WTC11 (cell line): ENCODE measurements at regions of chr4 and their contacts with region 1.

Region 1: DNA sequence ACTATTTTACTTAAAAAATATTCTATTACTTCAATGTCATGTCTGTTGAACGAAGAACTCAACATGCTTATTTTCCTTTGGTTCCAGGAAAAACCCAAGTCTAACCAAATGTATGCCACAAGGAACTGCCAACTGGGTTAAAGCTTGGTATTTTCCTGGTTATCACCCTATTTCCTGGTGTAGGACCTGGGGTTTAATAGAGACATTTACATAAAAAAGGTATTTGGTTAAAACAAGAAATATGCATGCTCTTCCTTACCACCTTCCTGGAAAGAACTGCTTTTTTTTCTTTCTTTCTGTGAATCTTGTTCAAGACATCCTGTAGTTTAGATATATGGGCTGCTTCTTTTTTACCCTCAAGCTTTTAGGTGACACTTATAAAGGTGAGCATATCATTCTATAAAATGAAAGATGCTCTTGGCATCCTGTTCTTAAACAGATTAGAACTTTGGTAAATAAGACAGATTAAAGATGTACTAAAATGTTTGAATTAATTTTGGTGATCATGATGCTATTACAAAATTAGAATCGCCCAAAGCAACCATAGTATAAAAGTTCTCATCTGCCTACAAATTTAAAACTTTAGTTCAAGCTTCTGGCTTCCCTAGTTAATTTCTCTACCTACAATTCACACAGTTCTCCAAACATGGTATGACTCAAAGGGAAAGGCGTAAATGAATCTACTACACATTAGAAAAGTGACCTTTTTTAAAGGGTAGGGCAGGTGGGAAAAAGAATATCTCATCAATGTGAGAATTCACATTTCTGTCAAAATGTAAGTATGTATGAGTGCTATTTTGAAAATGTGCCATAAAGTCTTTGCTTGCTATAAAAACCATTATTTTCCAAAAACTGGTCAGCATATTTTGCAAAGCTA is 103.5 kb downstream of the CNOT6L start:
- DNase-seq: no peak
- ATAC-seq: no peak
- H3K4me3 Mint-ChIP-seq: no peak overlapping the region
- H3K27ac Mint-ChIP-seq: 0 out of 2 replicates have a peak overlapping the region, but pooled peaks have one; percentile 20
- H3K4me1 Mint-ChIP-seq: peaks cover 31% of the 10 kb centered on the region
- H3K27me3 Mint-ChIP-seq: no peaks in the 10 kb centered on the region
- CTCF ChIP-seq: no peak

Region 2: DNA sequence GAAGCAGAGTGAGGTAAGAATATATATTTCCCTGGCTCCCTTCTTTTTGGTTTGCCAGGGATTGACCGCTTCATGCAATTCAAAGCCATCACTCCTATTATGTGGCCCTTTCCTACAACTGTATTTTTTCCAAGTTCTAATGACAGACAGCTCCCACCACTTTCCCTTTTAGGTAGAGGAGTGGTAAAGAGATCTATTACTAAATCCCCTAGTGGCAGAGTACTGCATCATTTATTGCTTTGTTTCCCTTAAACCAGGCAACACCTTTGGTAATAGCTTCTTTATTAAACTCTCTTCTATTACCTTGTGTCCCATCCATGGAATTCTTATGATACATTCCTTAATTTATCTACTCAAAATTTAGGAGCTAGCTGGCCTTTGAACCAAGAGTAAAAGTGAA is 12.8 kb after region 1 on chr4:
- CTCF ChIA-PET with region 1: interaction called, 10 read pairs
- POLR2A ChIA-PET with region 1: no interaction called
- DNase-seq: no peak
- ATAC-seq: peak; percentile 65
- H3K4me3 Mint-ChIP-seq: no peak overlapping the region
- H3K27ac Mint-ChIP-seq: no peak overlapping the region
- H3K4me1 Mint-ChIP-seq: no peaks in the 10 kb centered on the region
- H3K27me3 Mint-ChIP-seq: no peaks in the 10 kb centered on the region
- CTCF ChIP-seq: no peak